HepG2 (cell line): ENCODE measurements at regions of chr6 and their contacts with region 1.

Region 1: DNA sequence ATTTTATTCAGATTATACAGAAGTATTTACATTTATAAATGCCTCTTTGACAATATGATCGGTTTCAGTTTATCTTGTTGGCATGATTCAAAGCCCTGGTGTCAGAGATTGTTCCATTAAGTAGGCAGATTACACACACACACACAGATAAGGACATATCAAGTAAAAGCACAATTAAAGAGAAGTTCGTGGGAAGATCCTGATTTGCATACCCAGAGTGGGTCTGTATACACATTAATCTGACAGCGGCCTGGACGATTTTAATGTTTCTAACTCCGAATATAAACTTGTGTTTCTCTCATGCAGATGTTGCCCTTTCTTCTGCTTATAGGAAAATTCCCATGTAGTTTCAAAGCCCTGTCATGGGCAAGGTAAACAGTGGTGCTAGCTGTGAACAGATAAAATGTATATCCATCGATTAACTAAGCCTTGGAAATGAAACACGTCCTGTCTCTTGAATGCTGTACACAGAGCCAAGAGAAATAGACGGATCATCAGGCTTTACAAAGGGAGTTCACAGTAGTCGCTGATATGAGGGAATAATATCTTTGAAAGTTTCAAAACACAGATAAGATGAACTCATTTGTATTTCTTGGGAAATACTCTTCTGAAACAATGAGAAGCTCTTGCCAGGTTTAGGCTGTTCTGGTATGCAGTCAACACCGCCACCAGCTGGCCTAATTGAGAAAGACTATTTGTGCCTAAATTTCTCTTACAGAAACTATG is 108.2 kb upstream of the GMDS start:
- DNase-seq: peak; percentile 79
- ATAC-seq: peak; percentile 86
- H3K4me3 ChIP-seq: no peak overlapping the region
- H3K27ac ChIP-seq: no peak overlapping the region
- H3K4me1 ChIP-seq: peaks cover 13% of the 10 kb centered on the region; the same call in 1 of the 2 replicates
- H3K27me3 ChIP-seq: no peaks in the 10 kb centered on the region
- CTCF ChIP-seq: peak; percentile 88
- EP300 ChIP-seq: no peak
- POLR2A ChIP-seq: no peak
- RAD21 ChIP-seq: peak; percentile 91

Region 2: GRCh38 chr6:1604158-1605030 is 749.2 kb before region 1 on chr6:
- CTCF ChIA-PET with region 1: interaction called, 13 read pairs
- POLR2A ChIA-PET with region 1: no interaction called
- in situ Hi-C with region 1: loop called (anchors 5 kb)
- intact Hi-C with region 1: loop called (anchors 1 kb)
- DNase-seq: peak; percentile 54
- ATAC-seq: peak; percentile 89
- H3K4me3 ChIP-seq: peak overlapping the region; percentile 44 to 77 (median 56)
- H3K27ac ChIP-seq: no peak overlapping the region
- H3K4me1 ChIP-seq: peaks cover 57% of the 10 kb centered on the region
- H3K27me3 ChIP-seq: peaks cover 32 to 97% of the 10 kb centered on the region in 2 experiments
- CTCF ChIP-seq: peak; percentile 92
- EP300 ChIP-seq: no peak
- POLR2A ChIP-seq: no peak
- RAD21 ChIP-seq: peak; percentile 99

Region 3: DNA sequence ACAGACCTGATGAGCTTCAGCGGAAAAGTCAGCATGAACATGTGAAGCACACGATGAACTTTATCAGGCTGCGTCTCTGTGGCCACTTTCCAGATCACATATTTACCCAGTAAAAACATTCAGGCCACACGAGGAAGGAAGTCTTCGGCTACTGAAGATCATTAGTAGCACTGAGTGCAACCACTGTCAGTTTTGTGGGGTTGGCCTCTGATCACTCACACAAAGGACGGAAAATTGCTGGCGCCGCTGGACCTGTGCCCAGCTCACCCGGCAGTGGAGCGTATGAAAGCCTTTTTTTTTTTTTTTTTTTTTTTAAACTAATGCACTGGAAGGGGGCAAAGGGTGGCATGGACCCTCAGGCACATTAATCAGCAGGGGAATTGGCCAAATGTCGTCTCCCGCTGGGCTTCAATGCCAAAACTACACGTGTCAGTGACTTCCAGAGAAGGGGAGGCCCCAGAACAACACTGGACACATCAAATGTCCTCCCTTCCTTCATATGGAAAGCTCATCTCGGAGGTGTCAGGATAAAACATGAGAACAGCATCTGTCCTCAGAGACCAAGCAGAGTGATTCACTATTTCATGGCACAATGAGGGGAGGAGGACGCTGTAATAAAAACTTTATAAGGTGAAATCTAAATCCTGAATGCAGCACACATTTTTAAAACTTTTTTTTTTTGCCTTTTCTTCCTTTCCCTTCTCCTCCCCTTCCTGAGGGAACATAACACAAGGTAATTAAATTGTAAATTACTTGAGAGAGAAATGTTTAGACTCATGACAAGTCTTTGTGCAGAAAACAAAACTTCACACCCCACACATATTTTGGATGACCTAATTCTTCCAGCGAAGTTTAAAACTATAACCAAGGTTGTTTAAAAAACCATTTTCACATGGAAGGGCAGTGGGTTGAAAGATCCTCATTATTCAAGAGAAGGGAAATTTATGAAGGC is 520.5 kb before region 1 on chr6:
- CTCF ChIA-PET with region 1: no interaction called
- POLR2A ChIA-PET with region 1: no interaction called
- in situ Hi-C with region 1: no loop called
- intact Hi-C with region 1: no loop called
- DNase-seq: peak; percentile 52
- ATAC-seq: peak; percentile 26; the same call in 1 of the 3 replicates
- H3K4me3 ChIP-seq: no peak overlapping the region
- H3K27ac ChIP-seq: peak overlapping the region; percentile 12
- H3K4me1 ChIP-seq: peaks cover 13% of the 10 kb centered on the region
- H3K27me3 ChIP-seq: no peaks in the 10 kb centered on the region
- CTCF ChIP-seq: no peak
- EP300 ChIP-seq: no peak; a peak in 1 of 4 replicates
- POLR2A ChIP-seq: no peak
- RAD21 ChIP-seq: no peak

Region 4: GRCh38 chr6:1952726-1953360 is 400.7 kb before region 1 on chr6:
- CTCF ChIA-PET with region 1: no interaction called
- POLR2A ChIA-PET with region 1: no interaction called
- in situ Hi-C with region 1: no loop called
- intact Hi-C with region 1: loop called (anchors 10 kb)
- DNase-seq: no peak
- ATAC-seq: no peak
- H3K4me3 ChIP-seq: no peak overlapping the region
- H3K27ac ChIP-seq: no peak overlapping the region
- H3K4me1 ChIP-seq: no peaks in the 10 kb centered on the region
- H3K27me3 ChIP-seq: no peaks in the 10 kb centered on the region
- CTCF ChIP-seq: no peak
- EP300 ChIP-seq: no peak
- POLR2A ChIP-seq: no peak
- RAD21 ChIP-seq: no peak

Region 5: DNA sequence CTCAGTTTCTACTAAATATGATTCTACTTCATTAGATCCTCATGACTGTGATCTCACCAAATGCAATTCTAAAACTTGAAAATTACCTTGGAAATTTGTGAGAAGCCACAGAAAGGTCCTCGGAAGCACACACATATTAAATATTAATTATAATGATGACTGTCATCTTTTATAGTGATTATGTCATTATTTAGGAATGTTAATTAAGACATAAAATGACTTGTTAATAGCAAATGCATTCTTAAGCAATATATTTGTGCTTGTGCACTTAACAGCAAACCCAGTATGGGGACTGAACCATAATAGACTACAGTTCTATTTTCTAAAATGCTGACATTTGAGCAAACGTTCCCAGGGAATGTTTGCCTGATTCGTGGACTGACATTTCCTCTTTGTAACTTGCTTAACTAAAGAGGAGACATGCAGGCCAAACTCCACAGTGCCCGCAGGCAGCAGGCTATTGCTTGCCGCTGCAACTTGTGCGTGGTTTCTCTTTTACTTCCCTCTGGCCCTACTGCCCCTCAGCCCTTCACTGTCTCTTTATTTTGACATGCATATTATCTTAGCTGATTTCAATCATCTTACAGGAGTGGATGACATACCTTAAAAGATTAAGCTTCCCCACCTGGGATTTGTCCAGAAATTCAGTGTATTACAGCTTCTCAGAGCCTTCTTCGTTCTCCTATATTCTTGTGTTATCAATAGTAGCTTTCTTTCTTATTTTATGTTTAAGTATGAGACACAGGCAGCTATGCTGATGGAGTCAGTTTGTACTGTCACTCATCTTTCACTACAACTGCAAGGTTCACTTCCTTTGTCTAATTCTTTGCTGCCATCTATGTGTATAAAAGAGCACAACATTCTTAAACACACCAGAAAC is 249.7 kb before region 1 on chr6:
- CTCF ChIA-PET with region 1: no interaction called
- POLR2A ChIA-PET with region 1: no interaction called
- in situ Hi-C with region 1: no loop called
- intact Hi-C with region 1: loop called (anchors 10 kb)
- DNase-seq: peak; percentile 43
- ATAC-seq: peak; percentile 69
- H3K4me3 ChIP-seq: no peak overlapping the region
- H3K27ac ChIP-seq: no peak overlapping the region
- H3K4me1 ChIP-seq: peaks cover 5% of the 10 kb centered on the region
- H3K27me3 ChIP-seq: no peaks in the 10 kb centered on the region
- CTCF ChIP-seq: peak; percentile 75
- EP300 ChIP-seq: no peak
- POLR2A ChIP-seq: no peak
- RAD21 ChIP-seq: no peak

Region 6: DNA sequence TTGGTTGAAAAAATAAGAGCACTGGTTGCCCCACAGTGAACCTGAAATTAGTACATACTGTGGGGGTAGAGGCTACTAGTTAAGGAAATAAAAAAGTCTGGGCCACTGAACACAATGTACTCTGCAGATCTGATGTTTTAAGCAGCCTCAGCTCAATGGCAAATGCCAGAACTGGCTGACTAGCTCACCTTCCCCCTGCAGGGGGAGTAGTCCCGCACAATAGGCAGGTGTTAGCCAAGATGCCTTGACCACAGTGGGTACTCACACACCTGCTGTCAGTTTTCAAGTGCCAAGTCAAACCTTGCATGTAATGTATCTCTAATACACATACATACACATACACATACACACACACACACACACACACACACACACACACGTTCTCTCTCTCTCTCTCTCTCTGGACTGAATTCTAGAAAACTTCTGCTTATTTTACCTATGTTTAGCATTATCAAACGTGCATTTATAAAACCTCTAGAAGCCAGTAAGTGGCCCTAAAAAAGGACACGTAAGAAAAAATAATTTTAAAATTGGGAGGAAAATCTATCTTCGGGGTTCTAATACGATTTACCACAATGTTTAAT is 144.3 kb before region 1 on chr6:
- CTCF ChIA-PET with region 1: interaction called, 39 read pairs
- POLR2A ChIA-PET with region 1: no interaction called
- in situ Hi-C with region 1: loop called (anchors 5 kb)
- intact Hi-C with region 1: loop called (anchors 1 kb)
- DNase-seq: peak; percentile 72
- ATAC-seq: peak; percentile 99
- H3K4me3 ChIP-seq: no peak overlapping the region
- H3K27ac ChIP-seq: no peak overlapping the region
- H3K4me1 ChIP-seq: peaks cover 36% of the 10 kb centered on the region; the same call in 1 of the 2 replicates
- H3K27me3 ChIP-seq: no peaks in the 10 kb centered on the region
- CTCF ChIP-seq: peak; percentile 88
- EP300 ChIP-seq: 0 out of 4 replicates have a peak, but pooled peaks of 1 of the 2 experiments have one; percentile 12
- POLR2A ChIP-seq: no peak
- RAD21 ChIP-seq: peak; percentile 85

Region 7: DNA sequence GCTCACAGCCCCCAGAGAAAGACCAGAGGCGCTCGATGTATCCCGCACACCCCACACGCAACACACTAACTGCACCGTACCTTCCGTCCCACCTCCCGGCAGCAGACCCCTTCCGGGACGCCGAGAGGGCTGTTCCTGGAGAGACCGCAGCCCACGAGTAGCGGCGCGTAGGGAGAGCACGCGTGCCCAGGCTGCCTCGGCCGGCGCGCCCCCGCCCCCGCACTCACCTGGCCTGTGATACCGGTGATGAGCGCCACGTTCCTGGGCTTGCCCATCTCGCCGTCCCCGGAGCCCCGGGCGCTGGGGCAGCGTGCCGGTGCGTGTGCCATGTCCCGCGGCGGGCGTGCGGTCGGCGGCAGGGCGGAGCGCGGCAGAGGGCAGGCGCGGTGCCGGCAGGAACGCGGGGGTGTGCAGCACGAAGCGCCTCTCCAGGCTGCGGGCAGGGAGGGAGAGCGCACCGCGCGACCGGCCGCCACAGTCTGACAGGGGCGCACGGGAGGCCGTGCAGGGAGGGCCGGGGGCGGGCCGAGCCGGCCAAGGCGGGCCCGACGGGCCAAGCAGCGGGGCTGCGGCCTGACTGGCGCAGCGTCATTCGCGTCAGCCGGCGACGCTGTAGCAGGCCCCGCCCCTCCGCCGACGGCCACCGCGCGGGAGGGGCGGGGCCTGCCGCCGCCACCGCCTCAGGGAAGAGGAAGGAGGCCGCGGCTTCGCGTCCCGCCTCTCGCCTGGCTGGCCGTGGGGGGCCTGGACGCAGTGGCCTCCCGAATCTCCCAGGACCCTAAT is 108.3 kb before region 1 on chr6 and contains the start of gene GMDS:
- CTCF ChIA-PET with region 1: no interaction called
- POLR2A ChIA-PET with region 1: no interaction called
- in situ Hi-C with region 1: no loop called
- intact Hi-C with region 1: loop called (anchors 5 kb)
- DNase-seq: peak; percentile 85
- ATAC-seq: peak; percentile 97
- H3K4me3 ChIP-seq: peak within 1 kb of the TSS; percentile 90 to 97 (median 96)
- H3K27ac ChIP-seq: peak within 1 kb of the TSS; percentile 92
- H3K4me1 ChIP-seq: peaks cover 68% of the 10 kb centered on the region
- H3K27me3 ChIP-seq: no peaks in the 10 kb centered on the region; a peak in 1 of 5 replicates
- CTCF ChIP-seq: peak; percentile 37; the same call in 1 of the 2 replicates
- EP300 ChIP-seq: 0 out of 4 replicates have a peak, but pooled peaks of 1 of the 2 experiments have one; percentile 1
- POLR2A ChIP-seq: peak; percentile 87 to 97
- RAD21 ChIP-seq: peak; percentile 71
- total RNA-seq, gene GMDS: 59.6 and 64.4 TPM in 2 replicates

Region 8: GRCh38 chr6:2634139-2634964 is 280.8 kb after region 1 on chr6:
- CTCF ChIA-PET with region 1: no interaction called
- POLR2A ChIA-PET with region 1: no interaction called
- in situ Hi-C with region 1: no loop called
- intact Hi-C with region 1: loop called (anchors 5 kb)
- DNase-seq: peak; percentile 51
- ATAC-seq: peak; percentile 93
- H3K4me3 ChIP-seq: peak overlapping the region; percentile 28 to 68 (median 32); a peak in 5 of 6 replicates
- H3K27ac ChIP-seq: no peak overlapping the region
- H3K4me1 ChIP-seq: peaks cover 31% of the 10 kb centered on the region
- H3K27me3 ChIP-seq: peaks cover 1 to 72% of the 10 kb centered on the region in 2 experiments
- CTCF ChIP-seq: peak; percentile 98
- EP300 ChIP-seq: no peak
- POLR2A ChIP-seq: no peak
- RAD21 ChIP-seq: peak; percentile 98